Activated CD4-positive, alpha-beta T cell treated with anti-CD3 and anti-CD28 coated beads for 36 hours (primary cell): ENCODE measurements at regions of chr13 and their contacts with region 1.

Region 1: GRCh38 chr13:22801402-22802003 is 379.3 kb upstream of the SGCG start:
- DNase-seq: no peak
- ATAC-seq: no peak
- H3K4me3 Mint-ChIP-seq: no peak overlapping the region
- H3K27ac Mint-ChIP-seq: no peak overlapping the region
- H3K4me1 Mint-ChIP-seq: no peaks in the 10 kb centered on the region
- H3K27me3 Mint-ChIP-seq: peaks cover 20% of the 10 kb centered on the region

Region 2: DNA sequence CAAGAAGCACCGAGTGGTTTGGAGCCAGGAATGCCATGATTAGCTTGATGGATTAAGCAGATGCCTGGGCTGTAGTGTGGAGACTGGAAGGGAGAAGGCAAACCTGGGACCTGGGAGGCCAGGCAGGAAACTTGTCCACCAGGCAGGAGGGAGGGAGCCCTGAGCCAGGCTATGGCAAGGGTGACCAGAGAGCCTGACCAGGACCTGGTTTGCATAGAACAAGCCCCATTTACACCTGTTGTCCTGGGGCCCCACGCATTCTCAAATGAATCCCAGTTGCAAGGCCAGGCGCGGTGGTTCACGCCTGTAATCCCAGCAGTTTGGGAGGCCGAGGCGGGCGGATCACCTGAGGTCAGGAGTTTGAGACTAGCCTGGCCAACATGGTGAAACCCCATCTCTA is 1690.0 kb before region 1 on chr13:
- CTCF ChIA-PET with region 1: no interaction called
- POLR2A ChIA-PET with region 1: no interaction called
- intact Hi-C with region 1: loop called in 1 of 2 experiments (anchors 5 kb)
- DNase-seq: no peak
- ATAC-seq: no peak
- H3K4me3 Mint-ChIP-seq: no peak overlapping the region
- H3K27ac Mint-ChIP-seq: no peak overlapping the region
- H3K4me1 Mint-ChIP-seq: peaks cover 3% of the 10 kb centered on the region
- H3K27me3 Mint-ChIP-seq: no peaks in the 10 kb centered on the region

Region 3: DNA sequence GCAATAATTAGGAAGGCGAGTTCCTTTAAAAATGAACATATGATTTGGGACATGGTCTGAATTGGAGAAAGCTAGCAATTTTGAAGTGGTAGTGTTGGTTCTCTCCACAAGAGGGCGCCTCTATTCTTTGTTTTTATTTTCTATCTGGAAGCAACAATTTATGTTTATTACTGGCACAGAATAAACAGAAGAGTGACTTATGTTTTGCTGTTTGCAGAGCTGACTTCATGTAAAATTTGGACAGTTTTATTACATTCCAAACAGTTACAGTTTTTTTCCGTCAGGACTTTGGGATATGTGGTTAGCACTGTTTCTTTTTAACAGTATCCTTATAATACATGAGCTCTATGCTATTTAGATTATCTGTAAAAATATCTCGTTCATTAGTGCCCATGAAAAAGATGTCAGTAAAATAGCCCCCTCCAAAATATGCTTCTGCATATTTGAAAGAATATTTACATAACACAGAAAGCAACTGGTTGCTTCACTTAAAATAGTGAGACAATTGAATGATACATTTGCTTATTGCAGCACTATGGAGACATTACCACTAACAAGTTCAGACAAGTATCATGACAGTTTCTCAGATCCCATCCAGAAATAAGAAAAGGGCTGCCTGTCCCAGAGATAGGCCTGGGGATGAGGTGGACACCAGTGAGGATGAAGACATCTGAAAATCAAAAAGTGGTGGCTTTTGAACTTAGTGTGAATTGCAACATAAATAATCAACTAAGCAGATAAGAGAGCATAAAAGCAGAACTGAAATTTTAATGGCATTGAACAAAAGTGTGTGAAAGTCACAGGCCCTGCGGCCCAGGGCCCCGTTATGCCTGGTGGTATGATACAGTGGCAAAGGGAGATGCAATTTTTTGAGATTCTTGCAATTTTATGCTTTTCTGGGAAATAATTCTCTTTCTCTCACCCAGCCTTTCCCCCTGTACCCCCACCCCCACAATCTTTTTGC is 1162.9 kb before region 1 on chr13:
- CTCF ChIA-PET with region 1: interaction called, 8 read pairs
- POLR2A ChIA-PET with region 1: no interaction called
- intact Hi-C with region 1: loop called in 1 of 2 experiments (anchors 5 kb)
- DNase-seq: peak; percentile 39
- ATAC-seq: no peak
- H3K4me3 Mint-ChIP-seq: no peak overlapping the region
- H3K27ac Mint-ChIP-seq: no peak overlapping the region
- H3K4me1 Mint-ChIP-seq: no peaks in the 10 kb centered on the region
- H3K27me3 Mint-ChIP-seq: peaks cover 2% of the 10 kb centered on the region

Region 4: GRCh38 chr13:22821589-22821988 is 20.1 kb after region 1 on chr13:
- CTCF ChIA-PET with region 1: no interaction called
- POLR2A ChIA-PET with region 1: no interaction called
- intact Hi-C with region 1: no loop called
- DNase-seq: no peak
- ATAC-seq: no peak
- H3K4me3 Mint-ChIP-seq: no peak overlapping the region
- H3K27ac Mint-ChIP-seq: no peak overlapping the region
- H3K4me1 Mint-ChIP-seq: no peaks in the 10 kb centered on the region
- H3K27me3 Mint-ChIP-seq: peaks cover 2% of the 10 kb centered on the region

Region 5: DNA sequence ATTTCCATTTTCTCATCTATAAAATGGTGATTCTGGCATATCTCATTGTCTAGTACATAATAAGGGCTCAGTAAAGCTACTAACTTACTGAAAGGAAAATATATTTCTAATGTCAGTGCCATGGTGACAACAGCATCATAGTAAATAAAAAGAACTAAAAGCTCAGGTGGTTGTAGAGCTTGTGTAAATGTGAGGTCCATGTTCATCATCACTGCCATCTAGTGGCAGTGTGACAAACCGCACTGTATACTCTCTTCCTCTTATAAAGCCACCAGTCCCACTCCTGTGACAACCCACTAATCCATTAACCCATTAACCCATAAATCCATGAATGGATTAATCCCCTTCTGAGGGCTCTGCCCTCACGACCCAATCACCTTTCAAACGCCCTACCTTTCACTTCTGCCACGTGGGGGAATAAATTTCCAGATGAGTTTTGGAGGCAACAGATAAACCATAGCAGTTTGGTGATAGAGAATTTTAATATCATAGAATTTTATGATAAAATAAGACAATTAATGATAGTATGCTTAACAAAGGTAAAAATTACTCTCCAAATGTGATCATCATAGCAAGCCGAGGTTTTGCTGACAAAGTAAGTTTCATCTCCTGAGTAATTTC is 218.8 kb after region 1 on chr13:
- CTCF ChIA-PET with region 1: no interaction called
- POLR2A ChIA-PET with region 1: no interaction called
- intact Hi-C with region 1: loop called in 1 of 2 experiments (anchors 10 kb)
- DNase-seq: peak; percentile 48
- ATAC-seq: peak; percentile 68
- H3K4me3 Mint-ChIP-seq: no peak overlapping the region
- H3K27ac Mint-ChIP-seq: no peak overlapping the region
- H3K4me1 Mint-ChIP-seq: no peaks in the 10 kb centered on the region
- H3K27me3 Mint-ChIP-seq: peaks cover 18% of the 10 kb centered on the region